ENCODE measurements at regions of chr1 and their contacts with region 1.

Region 1: DNA sequence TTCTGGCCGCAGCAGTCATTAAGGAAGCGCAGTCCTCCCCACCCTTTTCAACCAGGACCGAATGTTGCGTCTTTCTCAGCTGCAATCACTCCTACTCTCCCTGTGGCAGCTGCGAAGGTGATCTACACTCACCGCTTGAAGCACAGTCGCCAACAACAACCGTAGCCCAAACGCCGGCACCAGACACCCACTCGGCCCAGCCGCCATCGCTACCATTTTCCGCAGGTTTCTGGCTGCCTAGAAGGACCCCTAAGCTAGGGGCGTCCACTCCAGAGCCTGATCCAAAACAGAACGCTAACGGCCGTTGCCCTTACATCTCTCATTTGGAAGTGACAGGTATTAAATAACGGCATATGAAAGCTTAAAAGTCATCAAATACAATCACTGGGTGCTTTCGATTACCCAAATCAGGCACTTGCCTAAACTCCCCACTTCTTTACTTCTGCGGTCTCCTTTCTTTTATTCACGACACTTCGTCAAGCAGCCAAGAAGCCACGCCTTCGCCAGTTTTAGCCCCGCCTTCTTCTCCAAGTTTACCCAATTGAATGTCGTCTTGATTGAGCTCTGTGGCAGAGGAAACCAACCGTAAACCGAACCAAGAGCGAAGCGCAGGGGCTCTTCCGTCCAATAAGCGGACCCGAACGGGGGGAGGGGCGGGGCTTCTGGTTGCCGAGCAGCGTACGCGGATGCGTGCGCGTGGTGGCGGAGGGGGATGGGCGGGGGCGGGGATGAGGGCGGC is at the start of gene SELENOF:
- DNase-seq: peak; percentile 99 to 100
- H3K4me3 ChIP-seq: peak within 1 kb of the TSS; percentile 82 to 85
- H3K27ac ChIP-seq: peak within 1 kb of the TSS; percentile 82 to 92
- H3K4me1 ChIP-seq: peaks cover 0 to 17% of the 10 kb centered on the region in 2 donors
- H3K27me3 ChIP-seq: no peaks in the 10 kb centered on the region
- CTCF ChIP-seq: no peak
- total RNA-seq, gene SELENOF: 124 TPM

Region 2: DNA sequence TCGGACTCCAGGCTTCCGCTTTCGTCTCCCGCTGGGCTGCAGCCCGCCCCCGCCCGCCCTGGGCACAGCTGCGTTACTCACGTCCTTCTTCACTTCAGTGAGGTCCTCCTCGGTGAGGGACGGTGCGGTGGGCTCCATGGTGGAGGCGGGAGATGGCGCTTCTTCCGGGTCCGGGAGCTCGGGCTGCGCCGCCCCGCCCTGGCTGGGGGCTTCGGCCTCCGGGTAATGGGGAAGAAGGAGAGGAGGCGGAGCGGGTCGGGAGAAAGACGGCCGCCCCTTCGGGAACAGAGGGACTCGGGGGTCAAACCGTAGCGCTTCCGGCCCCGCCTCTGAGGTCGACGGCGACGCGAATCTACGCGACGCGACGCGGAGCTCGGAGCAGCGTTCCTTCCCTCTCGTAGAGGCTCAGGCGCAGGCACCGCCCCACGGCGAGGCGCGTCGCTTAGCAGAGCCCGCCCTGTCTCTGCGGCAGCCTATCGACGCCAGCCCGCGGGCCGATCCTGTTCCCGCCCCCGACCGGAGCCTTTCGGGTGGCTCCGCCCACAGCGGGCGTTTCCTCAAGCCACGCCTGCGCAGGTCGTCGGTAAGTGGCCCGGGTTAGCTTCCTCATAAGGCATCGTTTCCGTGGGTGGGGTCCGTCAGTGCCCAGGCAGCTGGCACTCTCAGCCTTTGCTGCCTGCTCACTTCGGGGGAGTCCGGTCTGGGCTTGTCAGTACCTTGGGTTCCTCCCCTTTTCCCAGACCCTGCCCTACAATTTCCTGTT is 1637.7 kb before region 1 on chr1 and contains the start of gene BCL10:
- intact Hi-C with region 1: loop called (anchors 10 kb)
- DNase-seq: peak; percentile 95 to 99
- H3K4me3 ChIP-seq: peak within 1 kb of the TSS; percentile 75 to 82
- H3K27ac ChIP-seq: peak within 1 kb of the TSS; percentile 93 to 97
- H3K4me1 ChIP-seq: peaks cover 8 to 17% of the 10 kb centered on the region in 2 donors
- H3K27me3 ChIP-seq: no peaks in the 10 kb centered on the region
- CTCF ChIP-seq: no peak
- total RNA-seq, gene BCL10: 3.7 TPM

Region 3: DNA sequence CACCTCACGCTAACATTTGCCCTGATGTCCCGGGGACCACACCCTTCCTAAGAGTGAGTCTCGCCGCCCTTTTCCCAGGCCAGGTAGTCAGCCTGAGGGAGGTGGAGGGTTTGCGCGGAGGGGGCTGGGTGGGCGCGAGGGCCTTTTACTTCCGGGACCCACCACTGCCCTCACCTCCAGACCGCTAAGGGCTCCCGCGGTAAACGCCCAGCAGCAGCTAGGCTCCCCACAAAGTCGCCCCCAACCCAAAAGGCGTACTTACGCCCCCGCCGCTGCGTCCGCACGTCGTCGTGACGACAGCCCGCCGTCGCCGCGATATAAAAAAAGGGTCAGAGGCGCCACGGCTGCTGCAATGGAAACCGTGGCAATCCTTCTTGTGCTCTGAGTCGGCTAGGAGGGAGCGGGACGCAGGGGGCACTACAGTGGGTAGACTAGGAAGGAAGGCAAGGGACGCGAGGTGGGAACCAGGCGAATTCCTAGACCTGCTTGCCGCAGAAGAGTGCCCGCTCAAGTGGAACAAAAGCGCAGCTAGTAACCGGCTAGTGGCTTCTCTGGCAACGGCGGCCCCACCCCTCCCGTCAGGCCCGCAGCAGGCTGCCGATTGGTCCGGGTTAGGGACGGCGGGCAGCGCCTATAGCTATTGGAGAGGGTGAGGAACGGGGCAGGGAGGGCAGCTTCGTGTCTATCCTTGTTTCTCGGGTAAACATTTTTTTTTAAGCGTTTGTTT is 518.1 kb before region 1 on chr1 and contains the start of gene ODF2L:
- intact Hi-C with region 1: loop called (anchors 1 kb)
- DNase-seq: peak; percentile 78 to 94
- H3K4me3 ChIP-seq: peak within 1 kb of the TSS; percentile 52 to 76
- H3K27ac ChIP-seq: peak within 1 kb of the TSS; percentile 57 to 70
- H3K4me1 ChIP-seq: peaks cover 0 to 4% of the 10 kb centered on the region in 2 donors
- H3K27me3 ChIP-seq: no peaks in the 10 kb centered on the region
- CTCF ChIP-seq: no peak
- total RNA-seq, gene ODF2L: 6.2 TPM

Region 4: DNA sequence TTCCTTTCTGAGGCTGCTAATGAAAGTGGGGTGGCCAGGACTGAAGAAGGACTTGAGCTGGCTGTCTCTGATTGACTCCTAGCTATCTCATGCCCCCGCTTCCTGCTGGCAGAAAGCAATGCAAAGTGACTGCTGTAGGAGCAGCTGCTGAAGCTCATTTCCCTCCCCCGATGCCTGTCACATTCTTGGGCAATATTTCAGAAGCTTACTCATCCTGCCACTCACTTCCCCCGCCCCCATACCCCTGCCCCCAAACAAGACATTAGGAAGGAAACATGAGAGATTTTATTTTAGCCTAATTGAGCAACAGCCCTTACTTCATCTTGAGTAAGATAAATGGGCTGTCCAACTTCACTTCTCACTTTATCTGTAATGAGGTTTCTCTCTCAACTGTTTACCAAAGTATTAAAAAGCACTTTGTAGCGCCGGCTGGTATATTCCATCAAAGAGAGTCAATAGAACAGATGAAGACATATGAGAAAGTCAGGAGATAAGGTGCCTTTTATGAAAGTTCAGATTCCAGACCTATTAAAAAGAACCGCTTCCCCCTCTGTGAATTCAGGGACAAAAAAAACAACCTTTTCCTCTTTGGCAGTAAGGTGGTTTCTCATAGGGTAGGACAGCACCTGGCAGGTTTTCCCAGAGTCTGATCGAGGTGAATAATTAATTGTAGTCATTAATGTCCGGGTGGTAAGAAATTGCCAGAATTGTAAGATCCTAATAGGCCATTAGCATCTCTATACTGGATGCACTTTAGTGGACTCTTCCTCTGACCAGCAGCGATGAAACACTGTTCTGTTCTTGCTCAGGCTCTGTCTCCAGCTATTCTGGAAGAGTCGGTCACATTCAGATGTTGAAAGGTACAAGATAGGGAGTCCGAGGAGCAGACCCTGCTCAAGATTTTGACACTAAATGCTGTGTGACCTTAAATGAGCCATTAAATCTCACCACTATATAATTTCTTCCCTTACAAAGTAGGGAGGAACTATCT is 139.5 kb before region 1 on chr1:
- intact Hi-C with region 1: loop called (anchors 5 kb)
- DNase-seq: peak; percentile 39 to 80
- H3K4me3 ChIP-seq: peak overlapping the region in 1 of 2 donors; percentile 16
- H3K27ac ChIP-seq: peak overlapping the region; percentile 47 to 58
- H3K4me1 ChIP-seq: peaks cover 2 to 19% of the 10 kb centered on the region in 2 donors
- H3K27me3 ChIP-seq: no peaks in the 10 kb centered on the region
- CTCF ChIP-seq: no peak

Region 5: DNA sequence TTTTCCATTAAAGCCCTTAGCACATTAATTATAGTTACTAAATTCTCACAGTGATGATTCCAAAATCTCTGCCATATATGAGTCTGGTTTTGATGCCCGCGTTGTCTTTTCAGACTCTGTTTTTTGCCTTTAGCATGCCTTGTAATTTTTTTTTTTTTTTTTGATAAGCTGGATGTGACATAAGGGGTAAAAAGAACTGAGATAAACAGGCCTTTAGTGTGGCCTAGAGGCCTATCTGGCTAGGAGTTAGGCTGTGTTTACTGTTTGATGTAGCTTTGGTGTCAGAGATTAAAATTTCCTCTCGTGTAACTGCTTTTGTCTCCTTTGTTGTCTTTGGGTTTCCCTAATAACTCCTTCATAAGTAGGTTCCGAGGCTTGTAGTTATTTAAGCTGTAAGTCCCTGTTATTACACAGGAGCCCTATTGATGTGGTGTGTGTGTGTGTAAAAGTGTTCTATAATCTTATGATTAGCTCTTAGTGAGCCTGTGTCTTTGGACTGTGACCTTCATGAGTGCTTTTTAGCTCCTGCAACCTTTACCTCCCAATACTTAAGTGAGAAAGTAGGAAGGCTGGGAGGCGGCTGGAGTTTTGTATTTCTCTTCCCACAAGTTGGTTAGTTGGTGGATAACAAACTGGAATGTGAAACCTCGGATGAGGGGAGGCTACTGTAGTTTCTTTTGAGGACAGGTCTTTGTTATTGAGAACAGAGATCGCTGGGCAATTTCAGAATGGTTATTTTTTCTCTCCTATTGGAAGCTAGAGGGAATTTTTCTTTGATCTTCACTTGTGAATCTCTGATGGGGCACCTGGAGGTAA is 19.7 kb after region 1 on chr1:
- intact Hi-C with region 1: no loop called
- DNase-seq: no peak
- H3K4me3 ChIP-seq: no peak overlapping the region
- H3K27ac ChIP-seq: no peak overlapping the region
- H3K4me1 ChIP-seq: no peaks in the 10 kb centered on the region
- H3K27me3 ChIP-seq: no peaks in the 10 kb centered on the region
- CTCF ChIP-seq: no peak

Region 6: GRCh38 chr1:88891318-88891950 is 1977.4 kb after region 1 on chr1 and contains the start of gene GTF2B:
- intact Hi-C with region 1: loop called (anchors 10 kb)
- DNase-seq: peak; percentile 78 to 96
- H3K4me3 ChIP-seq: peak within 1 kb of the TSS; percentile 62 to 95
- H3K27ac ChIP-seq: peak within 1 kb of the TSS; percentile 91 to 99
- H3K4me1 ChIP-seq: peaks cover 2 to 11% of the 10 kb centered on the region in 2 donors
- H3K27me3 ChIP-seq: no peaks in the 10 kb centered on the region
- CTCF ChIP-seq: peak in 1 of 3 experiments; percentile 6
- total RNA-seq, gene GTF2B: 13.7 TPM